ENCODE measurements at regions of chr10 and their contacts with region 1.

Region 1: GRCh38 chr10:132643709-132644526 is 106.3 kb downstream of the INPP5A start:
- ATAC-seq: peak; percentile 37 to 90 (median 60)
- H3K4me3 ChIP-seq: no peak overlapping the region
- H3K27ac ChIP-seq: no peak overlapping the region
- H3K4me1 ChIP-seq: peaks cover 10 to 11% of the 10 kb centered on the region in 2 donors

Region 2: GRCh38 chr10:131846240-131847101 is 797.4 kb before region 1 on chr10:
- in situ Hi-C with region 1: no loop called
- ATAC-seq: peak in 2 of 8 experiments; percentile 12 to 14
- H3K4me3 ChIP-seq: no peak overlapping the region
- H3K27ac ChIP-seq: no peak overlapping the region
- H3K4me1 ChIP-seq: no peaks in the 10 kb centered on the region

Region 3: GRCh38 chr10:132452631-132453469 is 191.1 kb before region 1 on chr10:
- in situ Hi-C with region 1: loop called in 6 of 9 experiments (anchors 10 to 25 kb)
- ATAC-seq: peak; percentile 61 to 85 (median 79)
- H3K4me3 ChIP-seq: peak overlapping the region in 1 of 5 donors; percentile 6
- H3K27ac ChIP-seq: no peak overlapping the region
- H3K4me1 ChIP-seq: peaks cover 5 to 34% of the 10 kb centered on the region in 2 donors

Region 4: GRCh38 chr10:132458593-132459300 is 185.2 kb before region 1 on chr10:
- in situ Hi-C with region 1: loop called in 8 of 9 experiments (anchors 10 to 25 kb)
- ATAC-seq: peak; percentile 68 to 95 (median 72)
- H3K4me3 ChIP-seq: no peak overlapping the region
- H3K27ac ChIP-seq: no peak overlapping the region
- H3K4me1 ChIP-seq: peaks cover 0 to 3% of the 10 kb centered on the region in 2 donors

Region 5: GRCh38 chr10:132826524-132827422 is 182.9 kb after region 1 on chr10:
- in situ Hi-C with region 1: no loop called
- ATAC-seq: no peak
- H3K4me3 ChIP-seq: no peak overlapping the region
- H3K27ac ChIP-seq: no peak overlapping the region
- H3K4me1 ChIP-seq: no peaks in the 10 kb centered on the region